Activated CD4-positive, alpha-beta T cell treated with anti-CD3 and anti-CD28 coated beads, Interleukin-2, amount 10 ng/mL, durations not matched to agents 24 days and 14 days (primary cell): ENCODE measurements at regions of chr1 and their contacts with region 1.

Region 1: DNA sequence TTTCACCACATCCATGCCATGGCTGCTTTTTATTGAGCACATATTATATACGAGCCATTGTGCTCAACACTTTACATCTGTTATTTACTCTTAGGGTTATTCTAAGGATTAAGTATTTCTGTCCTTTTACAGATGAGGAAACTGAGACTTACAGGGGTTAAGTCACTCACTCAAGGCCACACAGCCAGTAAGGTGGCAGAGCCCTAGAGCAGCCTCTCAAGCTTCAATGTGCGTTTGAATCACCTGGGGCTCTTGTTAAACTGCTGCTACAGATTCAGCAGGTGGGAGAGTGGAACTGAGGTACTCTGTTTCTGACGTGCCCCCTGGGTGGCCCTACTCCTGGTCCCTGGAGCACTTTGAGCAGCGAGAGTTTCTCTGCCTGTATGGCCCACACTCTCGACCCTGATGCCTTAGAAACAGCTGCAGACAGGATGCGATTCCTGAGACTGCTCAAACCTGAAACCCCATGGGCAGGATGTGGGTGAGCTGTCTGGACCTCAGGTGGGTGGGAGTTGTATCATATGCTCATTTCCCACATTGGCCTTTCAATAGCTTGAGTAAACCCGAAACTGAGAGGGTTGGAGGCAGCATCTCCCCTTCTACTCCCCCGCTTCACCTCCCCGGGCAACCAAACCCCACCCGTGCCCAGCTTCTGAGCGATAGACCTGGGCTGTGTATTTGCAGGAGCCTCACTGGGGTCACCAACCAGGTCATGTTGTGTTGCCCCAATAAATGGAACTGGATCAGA is 59.3 kb downstream of the MAN1C1 start:
- DNase-seq: peak; percentile 95
- H3K4me3 Mint-ChIP-seq: peak overlapping the region; percentile 75
- H3K27ac Mint-ChIP-seq: peak overlapping the region; percentile 88
- H3K4me1 Mint-ChIP-seq: peaks cover 59% of the 10 kb centered on the region
- H3K27me3 Mint-ChIP-seq: peaks cover 81% of the 10 kb centered on the region

Region 2: DNA sequence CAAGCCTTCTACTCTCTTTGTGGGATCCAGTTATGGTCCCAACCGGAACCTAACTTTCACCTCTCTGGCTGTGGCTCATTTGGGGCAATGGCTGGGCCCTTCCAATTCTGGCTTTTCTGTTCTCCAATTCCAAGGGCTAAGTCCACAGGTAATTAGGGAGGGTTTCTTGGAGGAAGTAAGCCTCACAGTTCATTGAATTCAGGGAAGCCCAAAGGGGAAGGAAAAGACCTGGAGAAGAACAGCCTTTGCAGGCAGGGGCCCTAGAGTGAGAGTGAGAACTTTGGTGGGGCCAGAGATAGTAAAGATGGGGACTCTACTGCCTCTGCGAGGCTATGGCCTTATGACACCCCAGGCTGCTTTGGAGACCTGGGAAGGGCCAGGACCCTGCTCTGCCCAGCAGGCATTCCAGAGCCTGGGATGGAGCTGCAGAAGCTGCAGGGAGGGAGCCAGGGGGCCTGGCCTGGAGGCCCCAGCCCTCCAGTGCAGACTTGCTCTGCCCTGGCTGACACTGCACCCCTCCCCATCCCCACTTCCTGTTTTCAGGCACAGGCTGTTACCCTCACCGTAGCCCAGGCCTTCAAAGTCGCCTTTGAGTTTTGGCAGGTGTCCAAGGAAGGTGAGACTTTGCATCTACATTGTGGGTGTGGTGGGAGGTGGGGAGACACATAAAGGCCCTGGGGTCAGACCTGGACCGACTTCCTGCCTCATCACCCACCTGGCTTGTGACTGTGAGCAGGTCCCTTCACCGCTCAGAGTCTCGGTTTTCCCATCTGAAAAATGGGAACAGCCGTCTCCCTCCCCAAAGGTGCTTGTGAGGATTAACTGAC is 113.6 kb before region 1 on chr1:
- intact Hi-C with region 1: loop called (anchors 5 kb)
- DNase-seq: peak; percentile 91
- H3K4me3 Mint-ChIP-seq: peak overlapping the region; percentile 65
- H3K27ac Mint-ChIP-seq: peak overlapping the region; percentile 80
- H3K4me1 Mint-ChIP-seq: peaks cover 54% of the 10 kb centered on the region
- H3K27me3 Mint-ChIP-seq: no peaks in the 10 kb centered on the region

Region 3: GRCh38 chr1:25642574-25643108 is 33.3 kb before region 1 on chr1:
- intact Hi-C with region 1: loop called (anchors 1 kb)
- DNase-seq: peak; percentile 93
- H3K4me3 Mint-ChIP-seq: peak overlapping the region; percentile 69
- H3K27ac Mint-ChIP-seq: peak overlapping the region; percentile 6
- H3K4me1 Mint-ChIP-seq: peaks cover 38% of the 10 kb centered on the region
- H3K27me3 Mint-ChIP-seq: peaks cover 71% of the 10 kb centered on the region

Region 4: DNA sequence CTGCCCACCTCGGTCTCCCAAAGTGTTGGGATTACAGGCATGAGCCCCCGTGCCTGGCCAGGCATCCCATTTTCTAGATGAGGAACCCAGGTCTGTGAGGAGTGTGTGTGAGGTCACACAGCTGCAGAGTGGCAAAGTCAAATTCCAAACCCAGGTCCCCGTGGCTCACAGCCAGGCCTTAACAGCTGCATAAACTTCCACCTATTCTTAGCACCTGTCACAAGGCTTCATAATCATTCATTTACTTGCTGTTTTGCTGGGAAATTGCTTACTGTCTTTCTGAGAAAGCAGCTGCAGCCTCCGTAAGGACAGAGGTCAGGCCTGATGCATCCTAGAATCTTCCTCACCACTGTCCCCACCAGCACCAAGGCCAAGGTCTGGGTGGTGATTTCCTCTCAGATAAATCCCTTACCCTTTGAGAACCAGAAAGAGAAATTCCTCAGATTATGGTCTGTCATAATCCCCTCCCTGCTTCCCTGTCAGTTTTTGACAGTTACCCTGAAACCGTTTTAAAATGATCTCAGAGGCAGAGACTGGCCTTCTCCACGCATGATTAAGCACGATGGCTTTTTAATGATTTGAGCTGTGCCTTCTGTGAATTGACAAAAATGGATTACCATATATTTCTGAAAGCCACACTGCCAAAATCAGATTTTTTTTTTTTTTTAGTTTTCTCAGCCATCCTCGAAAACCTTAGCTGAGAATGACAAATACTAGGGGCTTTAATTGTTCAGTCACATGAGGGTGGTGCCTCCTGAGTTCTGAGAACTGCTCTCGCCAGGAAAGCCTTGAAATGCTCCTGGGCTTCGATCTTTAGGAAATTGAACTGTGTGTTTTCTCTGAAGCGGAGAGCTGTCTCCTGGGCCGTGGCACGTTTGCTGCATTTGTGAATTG is 54.1 kb after region 1 on chr1:
- intact Hi-C with region 1: loop called (anchors 2 kb)
- DNase-seq: no peak
- H3K4me3 Mint-ChIP-seq: no peak overlapping the region
- H3K27ac Mint-ChIP-seq: no peak overlapping the region
- H3K4me1 Mint-ChIP-seq: peaks cover 18% of the 10 kb centered on the region
- H3K27me3 Mint-ChIP-seq: peaks cover 58% of the 10 kb centered on the region

Region 5: DNA sequence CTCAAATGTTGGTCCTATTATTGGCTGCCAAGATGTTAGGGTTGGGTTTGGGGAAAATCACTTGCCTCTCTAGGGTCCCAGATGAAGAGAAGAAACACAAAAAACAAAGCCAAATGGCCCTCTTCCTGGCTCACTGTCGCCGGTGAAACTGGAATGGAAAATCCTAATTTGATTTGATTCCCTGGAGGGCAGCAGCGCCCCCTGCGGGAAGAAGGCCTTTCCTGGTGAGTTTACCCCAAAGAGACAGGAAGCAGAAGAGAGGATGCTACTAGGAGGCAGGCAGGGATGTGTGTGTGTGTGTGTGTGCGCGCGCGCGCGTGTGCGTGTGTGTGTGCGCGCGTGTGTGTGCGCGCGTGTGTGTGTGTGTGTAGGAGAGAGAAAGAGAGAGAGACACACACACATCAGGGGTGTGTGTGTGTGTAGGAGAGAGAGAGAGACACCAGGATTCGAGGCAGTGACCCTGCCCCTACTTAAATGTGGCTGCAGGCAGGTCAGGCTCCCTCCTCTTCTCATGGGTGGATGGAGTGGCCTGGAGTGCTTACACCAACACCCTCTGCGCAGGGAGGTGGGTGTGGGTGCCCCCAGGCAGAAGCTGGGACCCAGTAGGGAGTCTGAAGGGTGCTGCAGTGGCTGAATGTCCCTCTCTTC is 121.0 kb after region 1 on chr1:
- intact Hi-C with region 1: loop called (anchors 5 kb)
- DNase-seq: peak; percentile 94
- H3K4me3 Mint-ChIP-seq: peak overlapping the region; percentile 11
- H3K27ac Mint-ChIP-seq: peak overlapping the region; percentile 48
- H3K4me1 Mint-ChIP-seq: peaks cover 25% of the 10 kb centered on the region
- H3K27me3 Mint-ChIP-seq: peaks cover 32% of the 10 kb centered on the region